ENCODE measurements at regions of chr3 and their contacts with region 1.

Region 1: DNA sequence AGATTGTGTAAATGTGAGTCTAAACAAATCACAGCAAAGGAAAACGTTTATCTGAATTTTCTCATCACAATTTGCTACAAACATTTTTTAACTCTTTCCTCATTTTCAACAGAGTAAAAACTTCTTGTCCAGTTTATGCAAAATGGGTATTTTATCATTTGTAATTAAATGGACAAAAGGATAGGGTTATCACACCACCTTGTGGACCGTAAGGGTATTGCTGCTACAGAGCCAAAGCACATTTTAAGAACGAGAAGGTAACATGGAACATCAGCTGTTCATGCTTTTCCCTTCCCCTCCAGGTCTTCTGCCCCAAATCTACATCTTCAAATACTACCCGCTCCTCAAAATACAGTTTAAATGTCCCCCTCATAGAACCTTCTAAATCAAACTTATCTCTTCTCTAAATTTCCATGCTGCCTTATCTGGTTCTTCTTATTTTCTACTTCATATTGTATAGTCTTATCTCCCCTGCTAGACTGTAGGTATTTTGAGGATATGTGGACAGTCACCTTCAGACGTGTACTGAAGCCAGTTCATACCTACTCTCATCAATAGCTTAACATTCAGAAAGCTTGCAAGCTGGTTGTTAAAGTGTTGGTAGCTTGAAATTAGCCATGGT is 12.8 kb upstream of the SETMAR start:
- DNase-seq: no peak
- H3K4me3 ChIP-seq: no peak overlapping the region
- H3K27ac ChIP-seq: no peak overlapping the region
- H3K4me1 ChIP-seq: no peaks in the 10 kb centered on the region
- H3K27me3 ChIP-seq: no peaks in the 10 kb centered on the region
- CTCF ChIP-seq: peak; percentile 59 to 92 (median 82)

Region 2: DNA sequence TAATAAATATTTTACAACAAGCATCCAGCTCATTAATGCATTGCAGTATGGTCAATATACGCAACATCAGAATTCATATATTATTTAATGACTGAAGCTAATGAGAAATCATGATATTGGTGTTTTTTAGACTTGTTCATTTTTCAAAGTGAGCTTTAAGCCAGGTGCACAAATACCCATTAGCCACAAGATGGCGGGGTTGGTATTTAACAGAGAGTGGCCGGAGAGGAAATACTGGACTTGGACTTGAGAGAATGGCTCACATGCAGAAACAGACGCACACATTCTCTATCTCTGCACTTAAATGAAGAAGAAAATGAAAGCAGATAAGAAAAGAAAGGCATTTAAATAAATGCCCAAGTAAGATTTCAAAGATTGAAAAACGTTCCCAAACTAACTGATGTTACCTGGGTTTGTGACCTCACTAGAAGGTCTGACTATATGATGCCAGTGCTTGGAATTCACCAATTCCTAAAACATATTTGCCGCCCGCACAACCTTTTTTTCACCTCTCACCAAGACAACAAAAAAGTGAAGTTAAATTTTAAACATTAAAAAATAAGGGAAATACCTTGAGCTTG is 1089.7 kb before region 1 on chr3:
- intact Hi-C with region 1: loop called (anchors 1 kb)
- DNase-seq: peak in 1 of 2 donors; percentile 69
- H3K4me3 ChIP-seq: no peak overlapping the region
- H3K27ac ChIP-seq: no peak overlapping the region
- H3K4me1 ChIP-seq: peaks cover 0 to 2% of the 10 kb centered on the region in 2 donors
- H3K27me3 ChIP-seq: no peaks in the 10 kb centered on the region
- CTCF ChIP-seq: peak; percentile 72 to 79 (median 75)

Region 3: DNA sequence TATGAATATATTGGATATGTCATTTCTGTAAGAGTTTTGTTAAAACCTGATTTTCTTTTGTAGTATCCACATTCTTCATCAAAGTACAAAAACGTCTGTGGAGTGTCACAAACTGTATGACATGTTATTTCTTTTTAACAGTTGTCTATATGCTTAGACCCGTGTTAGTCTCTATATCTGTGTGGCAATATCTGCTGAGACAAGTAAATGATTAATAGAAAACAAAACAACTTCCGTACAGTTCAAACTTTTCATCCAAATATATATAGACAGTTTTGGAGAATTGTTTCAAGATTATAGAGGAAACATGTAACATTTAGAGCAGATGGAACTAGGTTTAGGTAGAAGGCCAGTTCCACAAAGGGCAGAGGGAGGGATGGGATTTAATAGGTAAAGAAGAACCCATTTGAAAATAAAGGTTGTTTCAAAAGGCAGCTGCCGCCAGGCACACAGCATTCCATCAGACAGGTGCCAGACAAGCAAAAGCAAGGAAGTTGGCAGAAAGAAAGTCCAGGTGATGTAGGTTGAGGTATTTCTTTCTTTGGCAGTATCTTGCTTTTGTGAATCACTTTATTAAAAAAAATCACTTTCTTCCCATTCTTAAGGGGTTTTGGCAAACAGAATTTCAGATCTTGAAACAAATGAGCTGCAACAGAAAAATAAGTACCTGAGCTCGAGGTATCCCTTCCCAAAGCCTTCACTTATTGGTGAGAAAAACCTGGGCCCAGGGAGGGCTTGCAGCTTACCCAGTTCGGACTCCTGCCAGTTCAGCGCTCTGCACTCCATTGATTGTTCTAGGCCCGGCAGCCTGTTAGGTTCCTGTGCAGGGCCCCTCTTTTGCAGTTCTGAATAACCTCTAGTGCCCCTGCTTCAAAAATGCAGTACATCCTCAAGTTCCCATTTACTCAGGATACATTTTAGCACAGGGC is 442.1 kb before region 1 on chr3:
- intact Hi-C with region 1: no loop called
- DNase-seq: no peak
- H3K4me3 ChIP-seq: no peak overlapping the region
- H3K27ac ChIP-seq: no peak overlapping the region
- H3K4me1 ChIP-seq: no peaks in the 10 kb centered on the region
- H3K27me3 ChIP-seq: no peaks in the 10 kb centered on the region
- CTCF ChIP-seq: no peak

Region 4: GRCh38 chr3:4340411-4341335 is 50.3 kb after region 1 on chr3:
- intact Hi-C with region 1: no loop called
- DNase-seq: no peak
- H3K4me3 ChIP-seq: no peak overlapping the region
- H3K27ac ChIP-seq: peak overlapping the region; percentile 19 to 53
- H3K4me1 ChIP-seq: peaks cover 0 to 5% of the 10 kb centered on the region in 2 donors
- H3K27me3 ChIP-seq: no peaks in the 10 kb centered on the region
- CTCF ChIP-seq: no peak

Measured in ascending aorta (tissue), 2 donors.